BJ (cell line): ENCODE measurements at regions of chr2 and their contacts with region 1.

Region 1: DNA sequence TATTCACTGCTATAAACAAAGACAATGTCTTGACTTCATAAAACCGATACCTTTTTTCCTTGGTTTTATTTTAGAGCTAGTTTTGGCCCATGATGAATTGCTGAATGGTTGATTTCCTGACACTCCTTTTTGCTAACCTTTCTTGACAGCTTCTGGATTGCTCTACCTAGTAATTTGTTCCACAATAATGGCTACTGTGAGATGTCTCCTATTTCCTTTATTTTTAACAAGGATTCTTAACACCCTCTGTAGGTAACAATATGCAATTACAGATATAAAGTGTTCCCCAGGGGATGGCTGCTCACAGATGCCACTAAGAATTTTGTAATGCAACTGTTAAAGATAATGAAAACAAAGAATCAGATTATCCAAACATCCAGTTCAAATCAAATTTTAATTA is 100.8 kb upstream of the ATP5MC3 start:
- DNase-seq: peak; percentile 4
- H3K4me3 ChIP-seq: no peak overlapping the region
- H3K27me3 ChIP-seq: peaks cover 1% of the 10 kb centered on the region; the same call in 1 of the 2 replicates
- CTCF ChIP-seq: peak; percentile 48

Region 2: GRCh38 chr2:175030380-175031271 is 251.7 kb before region 1 on chr2:
- CTCF ChIA-PET with region 1: interaction called, 12 read pairs
- POLR2A ChIA-PET with region 1: no interaction called
- DNase-seq: no peak
- H3K4me3 ChIP-seq: no peak overlapping the region
- H3K27me3 ChIP-seq: no peaks in the 10 kb centered on the region
- CTCF ChIP-seq: peak; percentile 53

Region 3: GRCh38 chr2:175709248-175709647 is 427.0 kb after region 1 on chr2:
- CTCF ChIA-PET with region 1: no interaction called
- POLR2A ChIA-PET with region 1: no interaction called
- DNase-seq: no peak
- H3K4me3 ChIP-seq: no peak overlapping the region
- H3K27me3 ChIP-seq: no peaks in the 10 kb centered on the region
- CTCF ChIP-seq: no peak